Endothelial cell of umbilical vein (primary cell): ENCODE measurements at regions of chr14 and their contacts with region 1.

Region 1: GRCh38 chr14:88621100-88621499 is 58.3 kb downstream of the ZC3H14 start:
- DNase-seq: no peak
- H3K4me3 ChIP-seq: no peak overlapping the region
- H3K27ac ChIP-seq: no peak overlapping the region
- H3K4me1 ChIP-seq: no peaks in the 10 kb centered on the region
- H3K27me3 ChIP-seq: no peaks in the 10 kb centered on the region
- CTCF ChIP-seq: no peak
- POLR2A ChIP-seq: no peak

Region 2: GRCh38 chr14:87992718-87993628 is 628.1 kb before region 1 on chr14 and contains the start of gene GALC:
- CTCF ChIA-PET with region 1: no interaction called
- POLR2A ChIA-PET with region 1: no interaction called
- dilution Hi-C with region 1: no loop called
- intact Hi-C with region 1: no loop called
- DNase-seq: peak; percentile 94
- H3K4me3 ChIP-seq: peak within 1 kb of the TSS; percentile 73 to 82 (median 74)
- H3K27ac ChIP-seq: peak within 1 kb of the TSS; percentile 58
- H3K4me1 ChIP-seq: peaks cover 12% of the 10 kb centered on the region
- H3K27me3 ChIP-seq: no peaks in the 10 kb centered on the region
- CTCF ChIP-seq: no peak
- POLR2A ChIP-seq: peak; percentile 76
- total RNA-seq, gene GALC: 14.2 and 15.0 TPM in 2 replicates

Region 3: DNA sequence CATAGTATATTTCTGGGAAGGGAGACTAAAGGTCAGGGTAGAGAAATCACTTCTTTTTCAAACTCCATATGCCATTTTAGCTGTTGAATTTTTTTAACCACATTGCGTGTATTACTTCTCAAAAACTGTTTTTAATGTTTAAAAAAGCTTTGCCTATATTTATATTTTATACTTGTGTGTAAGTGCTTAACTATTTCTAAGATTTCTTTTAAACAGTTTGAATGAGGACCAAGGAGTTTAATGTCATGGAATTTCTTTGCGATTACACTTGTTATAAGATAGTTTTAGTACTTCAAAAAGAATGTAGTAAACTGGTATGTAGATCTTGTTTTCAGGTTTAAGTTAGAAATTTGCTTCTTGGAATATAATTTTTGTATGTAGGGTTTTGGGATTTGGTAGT is 228.5 kb before region 1 on chr14:
- CTCF ChIA-PET with region 1: no interaction called
- POLR2A ChIA-PET with region 1: no interaction called
- dilution Hi-C with region 1: no loop called
- intact Hi-C with region 1: loop called (anchors 10 kb)
- DNase-seq: no peak
- H3K4me3 ChIP-seq: no peak overlapping the region
- H3K27ac ChIP-seq: no peak overlapping the region
- H3K4me1 ChIP-seq: peaks cover 10% of the 10 kb centered on the region
- H3K27me3 ChIP-seq: no peaks in the 10 kb centered on the region
- CTCF ChIP-seq: no peak
- POLR2A ChIP-seq: no peak